ENCODE measurements at regions of chr17 and their contacts with region 1.

Region 1: GRCh38 chr17:75920045-75920560 is 15.4 kb upstream of the MRPL38 start:
- DNase-seq: no peak
- ATAC-seq: no peak
- H3K4me3 ChIP-seq: no peak overlapping the region
- H3K27ac ChIP-seq: no peak overlapping the region
- H3K4me1 ChIP-seq: peaks cover 3% of the 10 kb centered on the region
- H3K27me3 ChIP-seq: no peaks in the 10 kb centered on the region

Region 2: GRCh38 chr17:75959051-75959838 is 39.1 kb after region 1 on chr17:
- intact Hi-C with region 1: loop called in 1 of 4 experiments (anchors 1 kb)
- DNase-seq: no peak
- ATAC-seq: peak in 1 of 2 donors; percentile 45
- H3K4me3 ChIP-seq: no peak overlapping the region
- H3K27ac ChIP-seq: peak overlapping the region; percentile 58
- H3K4me1 ChIP-seq: peaks cover 1% of the 10 kb centered on the region
- H3K27me3 ChIP-seq: no peaks in the 10 kb centered on the region

Region 3: GRCh38 chr17:76005263-76006149 is 85.4 kb after region 1 on chr17:
- intact Hi-C with region 1: no loop called
- DNase-seq: peak; percentile 73 to 84 (median 78)
- ATAC-seq: peak; percentile 57 to 69
- H3K4me3 ChIP-seq: no peak overlapping the region
- H3K27ac ChIP-seq: no peak overlapping the region
- H3K4me1 ChIP-seq: no peaks in the 10 kb centered on the region
- H3K27me3 ChIP-seq: no peaks in the 10 kb centered on the region